Heart right ventricle (tissue), 16 donors: ENCODE measurements at regions of chr2 and their contacts with region 1.

Region 1: DNA sequence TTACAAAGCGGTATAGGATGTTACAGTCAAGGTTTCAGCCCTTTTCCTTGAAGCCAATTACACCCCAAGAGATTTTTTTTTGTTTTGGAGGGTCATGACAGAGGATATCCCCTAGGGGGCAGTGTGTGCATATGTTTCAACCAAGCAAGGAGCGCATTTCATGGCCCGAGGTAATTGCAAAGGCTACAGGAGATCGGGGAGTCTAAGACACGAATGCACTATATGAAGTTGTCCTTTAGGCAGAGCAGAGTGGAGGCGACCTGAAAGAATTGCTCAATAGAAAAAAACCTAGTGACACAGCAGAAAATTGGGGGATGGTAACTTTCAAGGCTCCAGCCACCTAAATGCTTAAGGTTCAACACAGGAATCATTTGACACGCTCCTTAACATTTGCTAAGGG is 219.8 kb upstream of the PARD3B start:
- DNase-seq: peak in 1 of 2 donors; percentile 76
- ATAC-seq: peak in 6 of 8 donors; percentile 35 to 64 (median 56)
- H3K4me3 ChIP-seq: no peak overlapping the region
- H3K27ac ChIP-seq: no peak overlapping the region
- H3K4me1 ChIP-seq: peaks cover 0 to 35% (median 5%) of the 10 kb centered on the region in 9 donors
- H3K27me3 ChIP-seq: peaks cover 0 to 6% (median 0%) of the 10 kb centered on the region in 7 donors
- CTCF ChIP-seq: peak; percentile 81 to 92 (median 89)

Region 2: GRCh38 chr2:204260162-204260877 is 65.1 kb before region 1 on chr2:
- intact Hi-C with region 1: loop called in 2 of 10 experiments (anchors 2 kb)
- DNase-seq: peak; percentile 15 to 76
- ATAC-seq: peak; percentile 59 to 87 (median 74)
- H3K4me3 ChIP-seq: no peak overlapping the region
- H3K27ac ChIP-seq: peak overlapping the region in 4 of 10 donors; percentile 13 to 41 (median 32)
- H3K4me1 ChIP-seq: peaks cover 0 to 34% (median 15%) of the 10 kb centered on the region in 9 donors
- H3K27me3 ChIP-seq: peaks cover 0 to 4% (median 0%) of the 10 kb centered on the region in 7 donors
- CTCF ChIP-seq: peak; percentile 67 to 84 (median 81)

Region 3: GRCh38 chr2:204625167-204625566 is 299.7 kb after region 1 on chr2:
- intact Hi-C with region 1: loop called in 1 of 10 experiments (anchors 10 kb)
- DNase-seq: no peak
- ATAC-seq: no peak
- H3K4me3 ChIP-seq: no peak overlapping the region
- H3K27ac ChIP-seq: no peak overlapping the region
- H3K4me1 ChIP-seq: peaks cover 0 to 6% (median 0%) of the 10 kb centered on the region in 9 donors
- H3K27me3 ChIP-seq: no peaks in the 10 kb centered on the region
- CTCF ChIP-seq: peak in 6 of 9 donors; percentile 13 to 43 (median 20)

Region 4: DNA sequence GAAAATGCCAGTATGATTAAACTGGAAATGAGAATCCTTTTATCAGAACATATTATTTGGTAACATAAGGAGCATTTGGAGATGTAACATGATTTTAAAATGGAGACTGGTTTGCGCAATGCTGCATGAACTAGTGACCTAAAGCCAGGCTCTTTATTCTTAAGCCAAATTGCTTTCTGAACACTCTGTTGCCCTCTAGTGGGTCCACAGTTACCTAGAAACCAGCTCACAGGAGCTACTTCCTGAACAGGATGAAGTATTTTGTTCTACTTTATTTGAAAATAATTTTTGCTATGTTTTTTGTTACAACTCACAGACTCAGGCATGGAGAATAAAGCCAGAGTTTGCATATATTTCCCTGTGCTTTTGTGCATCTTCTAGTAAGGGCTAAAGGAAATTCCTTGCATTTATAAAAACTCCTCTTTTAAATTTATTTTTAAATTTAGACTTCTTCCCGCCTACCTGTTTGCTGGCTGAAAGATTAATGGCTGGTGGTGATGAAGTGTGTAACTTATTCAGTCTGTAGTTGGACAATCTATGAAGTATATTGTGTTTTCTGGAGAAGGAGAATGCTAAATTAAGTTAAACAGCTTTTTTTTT is 366.5 kb after region 1 on chr2:
- intact Hi-C with region 1: loop called (anchors 1 to 10 kb)
- DNase-seq: peak in 1 of 2 donors; percentile 67
- ATAC-seq: peak in 7 of 8 donors; percentile 75 to 90 (median 85)
- H3K4me3 ChIP-seq: no peak overlapping the region
- H3K27ac ChIP-seq: peak overlapping the region in 1 of 10 donors; percentile 37
- H3K4me1 ChIP-seq: peaks cover 0 to 14% (median 3%) of the 10 kb centered on the region in 9 donors
- H3K27me3 ChIP-seq: no peaks in the 10 kb centered on the region
- CTCF ChIP-seq: peak; percentile 48 to 90 (median 76)

Region 5: DNA sequence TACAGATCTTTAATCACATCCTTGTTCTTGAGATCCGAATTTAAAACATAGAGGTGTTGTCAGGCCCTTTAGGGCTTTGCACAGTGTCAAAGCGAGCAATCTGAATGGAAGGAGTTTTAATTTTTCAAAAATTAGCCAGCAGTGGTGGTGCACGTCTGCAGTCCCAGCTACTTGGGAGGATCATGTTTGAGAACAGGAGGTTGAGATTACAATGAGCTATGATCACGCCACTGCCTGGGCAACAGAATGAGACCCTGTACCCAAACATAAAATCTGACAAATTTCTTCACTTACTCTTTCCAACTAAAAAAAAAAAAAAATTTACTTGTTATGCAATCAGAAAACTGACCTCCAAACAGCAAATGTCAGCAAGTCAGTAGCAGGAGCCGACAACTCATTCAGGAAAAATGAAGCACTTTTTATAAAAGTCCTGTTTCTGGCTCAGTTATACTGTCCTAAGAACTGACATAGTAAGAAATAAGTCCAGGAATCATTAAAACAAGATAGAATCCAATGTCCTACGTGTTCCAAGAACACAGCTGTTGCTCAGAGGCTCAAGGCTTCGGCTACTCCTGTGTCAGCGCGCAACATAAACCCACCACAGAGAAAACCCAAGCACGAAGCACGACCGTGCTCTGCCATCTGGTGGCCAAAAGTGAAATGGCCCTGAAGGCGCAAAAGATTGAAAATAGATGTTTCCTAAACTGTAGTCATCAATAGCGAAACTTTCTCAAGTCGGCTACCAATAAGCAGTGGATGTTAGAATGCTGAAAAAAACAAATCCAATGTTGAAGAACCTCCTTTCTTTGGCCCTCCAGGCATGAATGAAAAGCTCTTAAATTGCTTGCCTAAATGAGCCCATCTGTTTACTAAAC is 1622.4 kb after region 1 on chr2:
- intact Hi-C with region 1: loop called in 3 of 10 experiments (anchors 5 to 10 kb)
- DNase-seq: peak; percentile 57 to 65
- ATAC-seq: peak; percentile 71 to 93 (median 90)
- H3K4me3 ChIP-seq: no peak overlapping the region
- H3K27ac ChIP-seq: peak overlapping the region in 3 of 10 donors; percentile 2 to 22 (median 2)
- H3K4me1 ChIP-seq: peaks cover 0 to 33% (median 0%) of the 10 kb centered on the region in 9 donors
- H3K27me3 ChIP-seq: peaks cover 0 to 8% (median 0%) of the 10 kb centered on the region in 7 donors
- CTCF ChIP-seq: peak; percentile 62 to 99 (median 91)